Panc1 (cell line): ENCODE measurements at regions of chr19 and their contacts with region 1.

Region 1: GRCh38 chr19:38929929-38930775 is at the start of gene SARS2:
- DNase-seq: peak; percentile 100
- ATAC-seq: peak; percentile 76
- H3K4me3 ChIP-seq: peak within 1 kb of the TSS; percentile 54 to 87
- H3K27ac ChIP-seq: peak within 1 kb of the TSS; percentile 97
- H3K4me1 ChIP-seq: peaks cover 11% of the 10 kb centered on the region
- H3K27me3 ChIP-seq: no peaks in the 10 kb centered on the region
- CTCF ChIP-seq: no peak
- total RNA-seq, gene SARS2: 186 TPM

Region 2: DNA sequence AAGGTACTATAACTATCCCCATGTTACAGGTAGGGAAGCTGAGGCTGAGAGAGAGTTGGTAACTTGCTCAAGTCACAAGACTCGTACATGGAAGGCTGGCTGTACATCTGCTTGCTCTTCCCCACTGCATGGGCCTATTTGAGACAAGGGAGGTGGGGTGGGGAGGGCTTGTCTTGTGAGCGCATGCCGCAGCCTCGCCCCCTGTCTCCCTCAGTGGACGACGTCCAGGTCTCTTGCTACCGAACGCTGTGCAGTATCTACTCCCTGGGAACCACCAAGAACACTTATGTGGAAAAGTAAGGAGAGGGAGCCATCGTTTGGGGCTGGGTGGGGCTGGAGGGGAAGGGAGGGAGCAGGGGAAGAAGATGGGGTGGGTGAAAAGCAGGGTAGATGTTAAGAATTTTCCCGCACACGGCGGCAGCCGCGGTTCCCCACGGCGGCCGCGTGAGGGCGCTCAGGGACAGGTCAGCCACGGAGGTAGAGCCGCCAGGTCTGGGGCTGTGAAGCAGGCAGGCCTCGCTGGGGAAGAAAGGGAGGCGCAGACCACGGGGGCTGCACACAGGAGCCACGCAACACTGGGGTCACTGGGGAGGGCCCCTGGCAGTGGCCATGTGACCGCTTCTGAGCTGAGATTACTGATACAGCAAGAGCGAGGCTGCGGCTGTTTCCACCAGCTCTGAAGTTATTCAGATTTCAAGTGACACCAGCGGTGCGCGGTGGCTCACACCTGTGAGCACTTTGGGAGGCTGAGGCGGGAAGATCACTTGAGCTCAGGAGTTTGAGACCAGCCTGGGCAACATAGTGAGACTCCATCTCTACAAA is 415.1 kb before region 1 on chr19:
- CTCF ChIA-PET with region 1: interaction called, 8 read pairs
- POLR2A ChIA-PET with region 1: no interaction called
- in situ Hi-C with region 1: loop called (anchors 10 kb)
- intact Hi-C with region 1: loop called (anchors 10 kb)
- DNase-seq: peak; percentile 85
- ATAC-seq: peak; percentile 91
- H3K4me3 ChIP-seq: peak overlapping the region in 1 of 2 experiments; percentile 14; a peak in 2 of 4 replicates
- H3K27ac ChIP-seq: 0 out of 2 replicates have a peak overlapping the region, but pooled peaks have one; percentile 2
- H3K4me1 ChIP-seq: peaks cover 4% of the 10 kb centered on the region; the same call in 1 of the 2 replicates
- H3K27me3 ChIP-seq: no peaks in the 10 kb centered on the region
- CTCF ChIP-seq: no peak

Region 3: GRCh38 chr19:38596057-38596981 is 333.8 kb before region 1 on chr19:
- CTCF ChIA-PET with region 1: no interaction called
- POLR2A ChIA-PET with region 1: interaction called, 12 read pairs
- in situ Hi-C with region 1: no loop called
- intact Hi-C with region 1: no loop called
- DNase-seq: peak; percentile 76
- ATAC-seq: peak; percentile 89
- H3K4me3 ChIP-seq: peak overlapping the region; percentile 32 to 50
- H3K27ac ChIP-seq: no peak overlapping the region
- H3K4me1 ChIP-seq: no peaks in the 10 kb centered on the region
- H3K27me3 ChIP-seq: no peaks in the 10 kb centered on the region
- CTCF ChIP-seq: no peak

Region 4: GRCh38 chr19:38729653-38730469 is 200.3 kb before region 1 on chr19:
- CTCF ChIA-PET with region 1: interaction called, 7 read pairs
- POLR2A ChIA-PET with region 1: interaction called, 3 read pairs
- in situ Hi-C with region 1: no loop called
- intact Hi-C with region 1: loop called (anchors 5 kb)
- DNase-seq: peak; percentile 61
- ATAC-seq: peak; percentile 46
- H3K4me3 ChIP-seq: no peak overlapping the region
- H3K27ac ChIP-seq: peak overlapping the region; percentile 93
- H3K4me1 ChIP-seq: peaks cover 96% of the 10 kb centered on the region
- H3K27me3 ChIP-seq: no peaks in the 10 kb centered on the region
- CTCF ChIP-seq: no peak

Region 5: DNA sequence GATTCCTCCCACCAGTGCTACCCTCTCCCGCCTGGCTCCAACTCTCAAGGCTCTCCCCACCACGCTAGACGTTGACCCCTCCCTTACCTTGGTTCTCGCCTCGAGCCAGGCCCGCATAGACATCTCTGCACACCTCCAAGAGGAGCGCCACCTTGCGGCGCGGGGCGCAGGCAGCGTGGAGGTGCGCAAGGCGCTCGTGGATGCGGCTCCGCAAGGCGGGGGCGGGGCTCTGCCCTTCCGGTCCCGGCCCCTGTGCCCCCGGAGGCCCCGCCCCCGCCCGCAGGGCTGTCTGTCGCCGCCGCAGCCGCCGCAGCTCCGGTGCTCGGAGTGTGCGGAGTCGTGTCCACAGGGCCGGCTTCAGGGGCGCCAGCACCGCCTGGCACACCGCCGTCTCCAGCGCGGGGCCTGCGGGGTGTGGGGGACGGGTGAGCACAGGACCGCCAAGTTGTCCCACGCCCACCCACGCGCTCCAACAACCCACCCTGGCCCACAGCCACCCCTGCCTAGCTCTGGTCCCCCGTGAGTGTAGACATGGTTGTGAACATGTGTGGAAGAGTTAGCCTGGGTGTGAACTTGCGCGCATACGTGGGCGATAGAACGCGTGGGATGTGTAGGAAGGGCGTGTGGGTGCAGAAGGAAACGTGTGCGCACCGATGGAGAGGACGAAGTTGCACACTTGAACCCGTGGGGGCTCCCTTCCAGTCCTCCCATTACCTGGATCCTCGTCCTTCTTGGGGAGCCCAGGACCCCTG is 60.1 kb before region 1 on chr19:
- CTCF ChIA-PET with region 1: no interaction called
- POLR2A ChIA-PET with region 1: interaction called, 12 read pairs
- in situ Hi-C with region 1: no loop called
- intact Hi-C with region 1: no loop called
- DNase-seq: no peak
- ATAC-seq: peak; percentile 44
- H3K4me3 ChIP-seq: no peak overlapping the region
- H3K27ac ChIP-seq: no peak overlapping the region
- H3K4me1 ChIP-seq: no peaks in the 10 kb centered on the region
- H3K27me3 ChIP-seq: no peaks in the 10 kb centered on the region
- CTCF ChIP-seq: no peak

Region 6: GRCh38 chr19:38949580-38950367 is 19.6 kb after region 1 on chr19:
- CTCF ChIA-PET with region 1: interaction called, 14 read pairs
- POLR2A ChIA-PET with region 1: no interaction called
- in situ Hi-C with region 1: no loop called
- intact Hi-C with region 1: no loop called
- DNase-seq: no peak
- ATAC-seq: peak; percentile 28
- H3K4me3 ChIP-seq: no peak overlapping the region
- H3K27ac ChIP-seq: no peak overlapping the region
- H3K4me1 ChIP-seq: no peaks in the 10 kb centered on the region
- H3K27me3 ChIP-seq: no peaks in the 10 kb centered on the region
- CTCF ChIP-seq: no peak